ENCODE measurements at regions of chr12 and their contacts with region 1.

Region 1: GRCh38 chr12:68364893-68365725 is 32.9 kb upstream of the MDM1 start:
- DNase-seq: peak; percentile 82 to 93
- ATAC-seq: peak; percentile 72 to 88 (median 79)
- H3K4me3 ChIP-seq: peak overlapping the region; percentile 21
- H3K4me3 Mint-ChIP-seq: peak overlapping the region; percentile 83
- H3K27ac ChIP-seq: peak overlapping the region; percentile 93
- H3K27ac Mint-ChIP-seq: peak overlapping the region; percentile 91
- H3K4me1 ChIP-seq: peaks cover 59% of the 10 kb centered on the region
- H3K4me1 Mint-ChIP-seq: peaks cover 73 to 75% of the 10 kb centered on the region in 2 donors
- H3K27me3 ChIP-seq: no peaks in the 10 kb centered on the region
- H3K27me3 Mint-ChIP-seq: no peaks in the 10 kb centered on the region
- CTCF ChIP-seq: no peak

Region 2: GRCh38 chr12:68317047-68317667 is 48.0 kb before region 1 on chr12:
- intact Hi-C with region 1: no loop called
- DNase-seq: peak in 1 of 2 donors; percentile 81
- ATAC-seq: peak in 1 of 3 donors; percentile 41
- H3K4me3 ChIP-seq: no peak overlapping the region
- H3K4me3 Mint-ChIP-seq: no peak overlapping the region
- H3K27ac ChIP-seq: no peak overlapping the region
- H3K27ac Mint-ChIP-seq: no peak overlapping the region
- H3K4me1 ChIP-seq: no peaks in the 10 kb centered on the region
- H3K4me1 Mint-ChIP-seq: no peaks in the 10 kb centered on the region
- H3K27me3 ChIP-seq: no peaks in the 10 kb centered on the region
- H3K27me3 Mint-ChIP-seq: no peaks in the 10 kb centered on the region
- CTCF ChIP-seq: peak; percentile 87

Region 3: GRCh38 chr12:68406134-68406594 is 41.1 kb after region 1 on chr12:
- intact Hi-C with region 1: no loop called
- DNase-seq: no peak
- ATAC-seq: no peak
- H3K4me3 ChIP-seq: no peak overlapping the region
- H3K4me3 Mint-ChIP-seq: no peak overlapping the region
- H3K27ac ChIP-seq: no peak overlapping the region
- H3K27ac Mint-ChIP-seq: peak overlapping the region in 1 of 2 donors; percentile 65
- H3K4me1 ChIP-seq: peaks cover 11% of the 10 kb centered on the region
- H3K4me1 Mint-ChIP-seq: peaks cover 31 to 37% of the 10 kb centered on the region in 2 donors
- H3K27me3 ChIP-seq: no peaks in the 10 kb centered on the region
- H3K27me3 Mint-ChIP-seq: no peaks in the 10 kb centered on the region
- CTCF ChIP-seq: no peak

Region 4: DNA sequence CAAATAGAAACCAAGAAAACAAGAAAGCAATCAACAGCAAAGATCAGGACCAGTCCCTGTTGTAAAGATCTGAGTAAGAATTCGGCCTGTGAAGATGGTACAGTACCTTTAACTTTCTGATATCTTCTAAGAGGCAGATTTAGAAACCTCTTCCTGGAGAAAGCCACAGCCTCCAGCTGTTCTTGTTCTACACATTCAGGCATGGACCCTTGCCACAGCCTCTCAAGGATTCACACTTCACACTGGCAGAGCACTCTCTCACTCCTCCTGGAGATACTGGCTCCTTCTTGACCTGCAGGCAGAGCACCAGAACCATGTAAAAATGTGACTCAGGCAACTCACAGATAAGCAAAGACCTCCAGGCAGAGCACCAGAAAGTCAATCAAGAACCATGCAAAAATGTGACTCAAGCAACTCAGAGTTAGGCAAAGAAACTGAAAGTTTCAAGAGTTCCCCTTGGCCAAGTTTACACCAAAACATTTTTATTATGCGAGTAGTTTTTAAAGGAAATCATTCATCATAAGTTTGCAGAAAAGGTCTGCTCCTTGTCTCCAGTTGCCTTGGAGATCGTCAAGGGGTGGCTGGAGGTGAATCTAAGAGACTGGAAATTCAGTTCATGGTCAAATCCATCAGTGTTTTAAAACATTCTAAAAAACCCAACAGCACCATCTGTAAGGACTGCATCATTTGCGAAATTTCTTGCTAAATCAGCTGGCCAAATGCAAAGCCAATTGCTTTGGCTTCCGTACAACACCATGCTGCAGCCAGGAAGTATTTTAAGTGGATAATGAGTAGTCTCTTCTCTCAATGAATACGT is 86.4 kb after region 1 on chr12:
- intact Hi-C with region 1: loop called (anchors 2 kb)
- DNase-seq: peak; percentile 50 to 54
- ATAC-seq: peak; percentile 65 to 73 (median 67)
- H3K4me3 ChIP-seq: peak overlapping the region; percentile 40
- H3K4me3 Mint-ChIP-seq: peak overlapping the region; percentile 90
- H3K27ac ChIP-seq: peak overlapping the region; percentile 67
- H3K27ac Mint-ChIP-seq: peak overlapping the region; percentile 87 to 90
- H3K4me1 ChIP-seq: peaks cover 46% of the 10 kb centered on the region
- H3K4me1 Mint-ChIP-seq: peaks cover 98 to 100% of the 10 kb centered on the region in 2 donors
- H3K27me3 ChIP-seq: no peaks in the 10 kb centered on the region
- H3K27me3 Mint-ChIP-seq: no peaks in the 10 kb centered on the region
- CTCF ChIP-seq: no peak

Region 5: DNA sequence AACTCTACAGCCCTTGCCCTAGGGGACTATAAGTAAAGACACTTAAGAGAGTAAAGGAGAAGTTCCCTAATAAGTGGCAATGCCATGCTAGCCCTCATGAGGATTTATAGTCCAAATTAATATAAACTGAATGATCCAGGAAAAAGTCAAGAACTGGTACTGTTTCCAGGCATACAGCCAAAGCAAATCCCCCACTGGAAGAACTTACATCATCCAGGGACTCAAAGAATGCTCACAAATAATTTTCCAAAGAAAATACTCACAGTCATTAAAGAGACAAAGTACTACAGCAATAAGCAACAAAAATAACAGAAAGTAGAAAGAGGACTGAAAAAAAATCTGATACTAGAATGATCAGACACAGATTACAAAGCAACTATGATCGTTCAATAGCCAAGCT is 165.9 kb after region 1 on chr12:
- intact Hi-C with region 1: loop called (anchors 1 kb)
- DNase-seq: no peak
- ATAC-seq: no peak
- H3K4me3 ChIP-seq: no peak overlapping the region
- H3K4me3 Mint-ChIP-seq: no peak overlapping the region
- H3K27ac ChIP-seq: no peak overlapping the region
- H3K27ac Mint-ChIP-seq: peak overlapping the region in 1 of 2 donors; percentile 85
- H3K4me1 ChIP-seq: peaks cover 9% of the 10 kb centered on the region
- H3K4me1 Mint-ChIP-seq: peaks cover 37 to 39% of the 10 kb centered on the region in 2 donors
- H3K27me3 ChIP-seq: no peaks in the 10 kb centered on the region
- H3K27me3 Mint-ChIP-seq: no peaks in the 10 kb centered on the region
- CTCF ChIP-seq: no peak

Region 6: DNA sequence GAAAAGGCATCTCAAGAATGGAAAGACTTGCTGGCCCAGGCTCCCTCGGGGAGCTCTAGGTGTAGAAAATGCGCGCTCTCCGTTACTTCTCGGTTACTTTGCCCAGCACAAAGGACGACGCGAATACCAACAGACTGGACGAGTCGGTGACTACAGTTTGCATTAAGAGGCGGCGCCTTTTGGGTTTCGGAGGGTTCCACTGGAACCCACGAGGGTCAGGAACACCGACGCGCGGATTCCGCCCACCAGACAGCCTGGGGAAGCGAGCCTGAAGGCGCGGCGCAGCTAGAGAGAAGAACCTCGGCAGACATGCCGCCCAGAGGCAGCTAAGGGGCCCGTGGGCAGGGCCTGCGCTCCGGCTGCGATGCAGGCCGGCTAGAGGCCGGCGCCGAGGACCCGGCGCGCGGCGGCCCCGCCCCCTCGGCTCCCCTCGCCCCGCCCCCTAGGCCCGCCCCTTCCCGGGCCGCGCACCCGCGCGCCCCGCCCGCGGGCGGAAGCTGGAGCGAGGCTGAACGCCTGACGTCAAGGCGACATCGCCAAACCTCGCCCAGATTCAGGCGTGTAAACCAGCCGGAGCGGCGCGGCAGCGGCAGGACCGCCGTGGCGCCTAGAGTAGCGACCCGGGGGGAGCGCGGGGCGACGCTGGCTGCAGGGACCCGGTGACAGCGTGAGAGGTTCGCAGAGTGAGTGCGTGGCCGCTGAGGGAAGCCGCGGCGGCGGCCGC is 245.4 kb after region 1 on chr12 and contains the start of gene RAP1B:
- intact Hi-C with region 1: loop called (anchors 2 kb)
- DNase-seq: peak; percentile 87 to 96
- ATAC-seq: peak; percentile 76 to 94 (median 85)
- H3K4me3 ChIP-seq: peak within 1 kb of the TSS; percentile 100
- H3K4me3 Mint-ChIP-seq: peak within 1 kb of the TSS; percentile 98
- H3K27ac ChIP-seq: peak within 1 kb of the TSS; percentile 99
- H3K27ac Mint-ChIP-seq: peak within 1 kb of the TSS; percentile 84 to 95
- H3K4me1 ChIP-seq: peaks cover 19% of the 10 kb centered on the region
- H3K4me1 Mint-ChIP-seq: peaks cover 57 to 58% of the 10 kb centered on the region in 2 donors
- H3K27me3 ChIP-seq: no peaks in the 10 kb centered on the region
- H3K27me3 Mint-ChIP-seq: no peaks in the 10 kb centered on the region
- CTCF ChIP-seq: no peak
- total RNA-seq, gene RAP1B: 517 to 664 (median 572) TPM